PC-3 (cell line): ENCODE measurements at regions of chr17 and their contacts with region 1.

Region 1: DNA sequence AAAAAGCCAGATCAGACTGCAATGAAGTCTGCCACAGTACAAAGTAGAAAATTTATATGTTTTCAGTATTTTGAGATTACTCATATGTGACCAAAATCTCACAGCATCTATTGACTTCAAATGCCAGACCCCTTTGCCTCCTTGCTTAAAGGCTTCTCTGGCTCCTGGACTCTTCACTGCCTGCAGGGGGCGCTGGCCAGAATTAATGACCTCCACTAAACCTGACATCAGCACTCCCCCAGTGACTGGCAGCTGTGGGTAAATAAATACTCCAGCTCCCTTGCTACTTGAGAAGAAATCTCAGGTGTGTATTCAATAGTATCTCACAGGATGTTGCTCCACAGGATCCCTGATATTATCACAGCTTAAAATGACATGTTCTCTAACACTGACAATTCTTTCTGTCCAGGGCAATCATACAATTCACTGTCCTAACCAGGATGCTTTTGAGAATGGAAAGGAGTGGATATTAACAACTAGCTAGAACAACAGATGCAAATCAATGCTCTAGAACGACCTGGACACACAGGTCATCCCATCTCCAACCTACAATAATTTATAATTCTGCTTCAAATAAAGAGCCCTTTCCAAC is 4.0 kb downstream of the BECN1 start:
- DNase-seq: peak; percentile 69
- ATAC-seq: 0 out of 2 replicates have a peak, but pooled peaks have one; percentile 17
- H3K4me3 ChIP-seq: no peak overlapping the region
- H3K27ac ChIP-seq: no peak overlapping the region
- H3K4me1 ChIP-seq: no peaks in the 10 kb centered on the region
- H3K27me3 ChIP-seq: no peaks in the 10 kb centered on the region
- CTCF ChIP-seq: peak; percentile 86

Region 2: GRCh38 chr17:41688699-41689496 is 1131.1 kb before region 1 on chr17 and contains the start of gene EIF1:
- CTCF ChIA-PET with region 1: no interaction called
- POLR2A ChIA-PET with region 1: no interaction called
- intact Hi-C with region 1: no loop called
- DNase-seq: peak; percentile 98
- ATAC-seq: peak; percentile 76
- H3K4me3 ChIP-seq: peak within 1 kb of the TSS; percentile 97
- H3K27ac ChIP-seq: peak within 1 kb of the TSS; percentile 95
- H3K4me1 ChIP-seq: peaks cover 6% of the 10 kb centered on the region; the same call in 1 of the 2 replicates
- H3K27me3 ChIP-seq: no peaks in the 10 kb centered on the region
- CTCF ChIP-seq: no peak
- total RNA-seq, gene EIF1: 88.7 and 95.9 TPM in 2 replicates

Region 3: GRCh38 chr17:42779936-42780850 is 39.8 kb before region 1 on chr17 and contains the start of gene WNK4:
- CTCF ChIA-PET with region 1: interaction called, 3 read pairs
- POLR2A ChIA-PET with region 1: no interaction called
- intact Hi-C with region 1: loop called (anchors 5 kb)
- DNase-seq: peak; percentile 81
- ATAC-seq: peak; percentile 76
- H3K4me3 ChIP-seq: peak within 1 kb of the TSS; percentile 99
- H3K27ac ChIP-seq: peak within 1 kb of the TSS; percentile 89
- H3K4me1 ChIP-seq: peaks cover 32% of the 10 kb centered on the region
- H3K27me3 ChIP-seq: no peaks in the 10 kb centered on the region
- CTCF ChIP-seq: no peak
- total RNA-seq, gene WNK4: 13.0 and 17.4 TPM in 2 replicates

Region 4: DNA sequence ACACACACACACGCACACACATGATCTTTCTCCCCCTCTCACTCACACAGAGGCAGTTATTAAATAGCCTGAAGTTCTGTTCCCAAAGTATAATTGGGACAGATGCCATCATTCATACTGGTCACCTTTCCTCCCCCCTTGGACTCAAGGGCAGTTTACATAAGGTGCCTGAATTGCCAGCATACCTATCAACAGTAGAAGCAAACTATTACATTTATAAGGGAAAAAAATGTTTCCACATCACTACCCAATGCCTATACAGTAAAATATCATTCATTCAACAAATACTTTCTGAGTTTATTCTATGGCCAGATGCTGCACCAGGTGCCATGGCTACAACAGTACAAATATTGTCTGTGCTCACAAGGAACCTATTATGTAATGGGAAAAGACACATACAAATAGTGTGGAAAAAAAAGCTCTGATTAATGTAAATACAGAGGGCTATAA is 15.1 kb before region 1 on chr17:
- CTCF ChIA-PET with region 1: interaction called, 3 read pairs
- POLR2A ChIA-PET with region 1: interaction called, 3 read pairs
- intact Hi-C with region 1: loop called (anchors 2 kb)
- DNase-seq: peak; percentile 30
- ATAC-seq: peak; percentile 68
- H3K4me3 ChIP-seq: no peak overlapping the region
- H3K27ac ChIP-seq: peak overlapping the region; percentile 29; the same call in 1 of the 2 replicates
- H3K4me1 ChIP-seq: peaks cover 14% of the 10 kb centered on the region
- H3K27me3 ChIP-seq: no peaks in the 10 kb centered on the region
- CTCF ChIP-seq: no peak